ENCODE measurements at regions of chr15 and their contacts with region 1.

Region 1: GRCh38 chr15:61169904-61170695 is 59.0 kb downstream of the RORA start:
- DNase-seq: peak; percentile 22
- H3K4me3 Mint-ChIP-seq: no peak overlapping the region
- H3K27ac Mint-ChIP-seq: peak overlapping the region; percentile 10
- H3K4me1 Mint-ChIP-seq: peaks cover 20% of the 10 kb centered on the region
- H3K27me3 Mint-ChIP-seq: peaks cover 6% of the 10 kb centered on the region

Region 2: GRCh38 chr15:61834076-61834697 is 664.1 kb after region 1 on chr15:
- intact Hi-C with region 1: loop called (anchors 2 kb)
- DNase-seq: peak; percentile 51
- H3K4me3 Mint-ChIP-seq: no peak overlapping the region
- H3K27ac Mint-ChIP-seq: no peak overlapping the region
- H3K4me1 Mint-ChIP-seq: peaks cover 2% of the 10 kb centered on the region
- H3K27me3 Mint-ChIP-seq: peaks cover 19% of the 10 kb centered on the region